ENCODE measurements at regions of chr19 and their contacts with region 1.

Region 1: DNA sequence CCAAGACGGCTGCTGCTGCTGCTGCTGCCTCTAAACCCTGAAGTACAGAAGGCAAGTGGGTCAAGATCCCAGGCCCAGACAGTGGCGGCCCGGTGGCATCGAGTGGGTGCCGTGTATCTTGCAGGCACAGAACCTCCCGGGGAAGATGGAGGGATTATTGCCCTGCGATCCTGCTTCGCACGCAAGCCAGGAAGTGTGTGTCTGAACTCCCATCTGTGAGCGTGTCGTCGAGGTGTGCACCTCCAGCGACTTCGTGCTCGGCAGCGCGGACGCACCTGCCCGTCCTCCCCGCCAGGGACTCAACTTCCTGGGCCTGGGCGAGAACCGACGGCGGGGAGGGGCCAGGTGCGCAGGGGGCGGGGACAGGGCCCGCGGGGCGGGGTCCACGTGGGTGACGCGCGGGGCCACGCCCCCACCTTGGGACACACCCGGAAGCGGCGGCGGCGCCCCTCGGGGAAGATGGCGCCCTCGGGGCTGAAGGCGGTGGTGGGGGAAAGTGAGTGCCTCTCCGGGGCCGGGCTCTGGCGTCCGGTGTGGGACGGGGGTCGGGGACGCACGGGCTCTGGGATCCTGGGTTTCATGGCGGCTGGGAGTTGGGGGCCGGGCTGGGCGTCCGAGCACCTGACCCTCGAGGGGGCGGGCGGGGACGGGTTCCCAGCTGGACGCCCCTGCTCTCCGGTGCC is at the start of gene STXBP2:
- DNase-seq: no peak
- H3K4me3 ChIP-seq: peak within 1 kb of the TSS; percentile 57
- H3K27me3 ChIP-seq: no peaks in the 10 kb centered on the region
- CTCF ChIP-seq: no peak
- polyA plus RNA-seq, gene STXBP2: 28.6 and 39.4 TPM in 2 replicates

Region 2: GRCh38 chr19:7618771-7619514 is 17.9 kb before region 1 on chr19:
- CTCF ChIA-PET with region 1: no interaction called
- POLR2A ChIA-PET with region 1: no interaction called
- DNase-seq: no peak
- H3K4me3 ChIP-seq: no peak overlapping the region
- H3K27me3 ChIP-seq: no peaks in the 10 kb centered on the region
- CTCF ChIP-seq: no peak

Region 3: GRCh38 chr19:7652061-7652641 is 15.3 kb after region 1 on chr19:
- CTCF ChIA-PET with region 1: interaction called, 15 read pairs
- POLR2A ChIA-PET with region 1: no interaction called
- DNase-seq: peak; percentile 19
- H3K4me3 ChIP-seq: no peak overlapping the region; the same call in 1 of the 2 replicates
- H3K27me3 ChIP-seq: peaks cover 3% of the 10 kb centered on the region; the same call in 1 of the 2 replicates
- CTCF ChIP-seq: peak; percentile 97

Measured in BJ (cell line).